HEK293 (cell line): ENCODE measurements at regions of chr5 and their contacts with region 1.

Region 1: GRCh38 chr5:42908509-42909488 is 97.1 kb upstream of the SELENOP start:
- H3K4me3 ChIP-seq: peak overlapping the region; percentile 40
- H3K27ac ChIP-seq: no peak overlapping the region
- H3K4me1 ChIP-seq: no peaks in the 10 kb centered on the region
- CTCF ChIP-seq: peak; percentile 87

Region 2: DNA sequence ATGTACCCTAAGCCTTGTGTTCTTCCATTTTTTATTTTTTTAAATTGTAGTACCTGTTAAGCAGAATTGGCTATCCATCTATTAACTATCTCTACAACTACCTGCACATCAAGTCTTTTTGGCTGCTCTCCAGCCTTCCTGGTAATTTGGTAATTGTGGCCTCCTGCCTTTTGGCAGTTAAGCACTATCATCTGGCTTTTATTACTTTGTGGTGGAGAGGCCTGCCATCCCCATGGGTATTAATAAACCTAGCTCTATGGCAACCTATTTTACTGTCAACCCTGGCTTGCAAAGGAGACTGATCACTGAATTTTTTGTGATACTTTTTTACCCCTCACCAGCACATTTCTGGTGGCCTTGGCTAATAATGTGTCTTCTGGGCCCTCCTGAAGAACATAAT is 117.6 kb before region 1 on chr5:
- CTCF ChIA-PET with region 1: no interaction called
- POLR2A ChIA-PET with region 1: no interaction called
- H3K4me3 ChIP-seq: no peak overlapping the region
- H3K27ac ChIP-seq: no peak overlapping the region
- H3K4me1 ChIP-seq: no peaks in the 10 kb centered on the region
- CTCF ChIP-seq: no peak

Region 3: GRCh38 chr5:42842921-42843641 is 65.7 kb before region 1 on chr5:
- CTCF ChIA-PET with region 1: no interaction called
- POLR2A ChIA-PET with region 1: no interaction called
- H3K4me3 ChIP-seq: no peak overlapping the region
- H3K27ac ChIP-seq: no peak overlapping the region
- H3K4me1 ChIP-seq: 0 out of 2 replicates have a peak, but pooled peaks cover 2% of the 10 kb centered on the region
- CTCF ChIP-seq: no peak

Region 4: GRCh38 chr5:42889311-42889933 is 19.4 kb before region 1 on chr5:
- CTCF ChIA-PET with region 1: interaction called, 20 read pairs
- POLR2A ChIA-PET with region 1: no interaction called
- H3K4me3 ChIP-seq: no peak overlapping the region
- H3K27ac ChIP-seq: no peak overlapping the region
- H3K4me1 ChIP-seq: peaks cover 4% of the 10 kb centered on the region; the same call in 1 of the 2 replicates
- CTCF ChIP-seq: peak; percentile 75

Region 5: GRCh38 chr5:42970636-42971559 is 62.1 kb after region 1 on chr5:
- CTCF ChIA-PET with region 1: interaction called, 16 read pairs
- POLR2A ChIA-PET with region 1: no interaction called
- H3K4me3 ChIP-seq: no peak overlapping the region
- H3K27ac ChIP-seq: no peak overlapping the region
- H3K4me1 ChIP-seq: no peaks in the 10 kb centered on the region
- CTCF ChIP-seq: no peak

Region 6: GRCh38 chr5:43040287-43041098 is 131.7 kb after region 1 on chr5 and contains the start of gene ANXA2R:
- CTCF ChIA-PET with region 1: interaction called, 25 read pairs
- POLR2A ChIA-PET with region 1: interaction called, 7 read pairs
- H3K4me3 ChIP-seq: peak within 1 kb of the TSS; percentile 56
- H3K27ac ChIP-seq: peak within 1 kb of the TSS; percentile 84
- H3K4me1 ChIP-seq: no peaks in the 10 kb centered on the region
- CTCF ChIP-seq: peak; percentile 79

Region 7: DNA sequence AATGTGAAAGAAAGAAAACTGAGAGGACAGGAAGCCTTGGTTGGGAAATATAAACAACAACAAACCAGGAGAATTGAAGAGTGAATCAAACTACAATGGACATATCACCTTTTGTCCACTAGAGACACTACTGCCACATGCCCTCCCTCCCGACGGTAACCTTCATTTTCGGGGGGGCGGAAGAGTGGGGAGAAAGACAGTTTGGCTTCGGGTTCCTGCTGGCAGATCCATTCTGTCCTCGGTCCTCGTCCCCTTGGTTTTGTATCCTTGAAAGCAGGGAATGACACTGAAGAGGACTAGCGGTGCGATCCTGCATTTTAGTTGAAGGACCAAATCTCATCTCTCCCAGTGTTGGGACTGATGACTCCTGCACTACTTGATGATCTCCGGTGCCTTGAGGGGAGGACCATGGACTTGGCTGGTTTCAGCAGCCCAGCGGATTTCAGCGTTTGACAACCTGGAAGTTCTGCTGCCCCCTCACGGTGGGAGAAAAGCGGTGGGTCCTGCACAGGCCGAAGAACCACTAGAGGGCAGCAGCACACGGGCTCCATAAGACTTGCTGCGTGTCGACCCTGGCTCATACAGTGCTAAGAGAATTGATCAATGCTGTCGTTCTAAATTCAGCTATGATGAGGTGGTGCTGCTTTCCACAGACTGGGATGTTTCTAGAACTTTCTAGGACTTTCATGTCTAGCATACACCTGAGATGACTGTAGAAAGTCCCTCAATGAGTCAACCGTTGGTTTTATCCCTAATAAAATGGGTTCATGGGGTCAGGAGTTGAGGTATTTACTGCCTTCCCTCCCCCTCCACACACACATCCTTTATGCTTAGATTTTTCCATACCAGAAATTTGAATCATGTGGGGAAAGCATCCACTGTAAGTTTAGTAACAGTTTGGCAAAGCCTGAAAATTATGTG is 196.8 kb after region 1 on chr5:
- CTCF ChIA-PET with region 1: interaction called, 43 read pairs
- POLR2A ChIA-PET with region 1: no interaction called
- H3K4me3 ChIP-seq: peak overlapping the region; percentile 44
- H3K27ac ChIP-seq: no peak overlapping the region
- H3K4me1 ChIP-seq: no peaks in the 10 kb centered on the region
- CTCF ChIP-seq: peak; percentile 100